Spleen (tissue), 13 donors: ENCODE measurements at regions of chr2 and their contacts with region 1.

Region 1: GRCh38 chr2:60998628-60999545 is 18.6 kb upstream of the PEX13 start:
- DNase-seq: no peak
- H3K4me3 ChIP-seq: no peak overlapping the region
- H3K27ac ChIP-seq: peak overlapping the region in 1 of 8 donors; percentile 2
- H3K4me1 ChIP-seq: peaks cover 0 to 29% (median 5%) of the 10 kb centered on the region in 6 donors
- H3K27me3 ChIP-seq: no peaks in the 10 kb centered on the region
- CTCF ChIP-seq: peak; percentile 37 to 76 (median 65)
- POLR2A ChIP-seq: no peak

Region 2: DNA sequence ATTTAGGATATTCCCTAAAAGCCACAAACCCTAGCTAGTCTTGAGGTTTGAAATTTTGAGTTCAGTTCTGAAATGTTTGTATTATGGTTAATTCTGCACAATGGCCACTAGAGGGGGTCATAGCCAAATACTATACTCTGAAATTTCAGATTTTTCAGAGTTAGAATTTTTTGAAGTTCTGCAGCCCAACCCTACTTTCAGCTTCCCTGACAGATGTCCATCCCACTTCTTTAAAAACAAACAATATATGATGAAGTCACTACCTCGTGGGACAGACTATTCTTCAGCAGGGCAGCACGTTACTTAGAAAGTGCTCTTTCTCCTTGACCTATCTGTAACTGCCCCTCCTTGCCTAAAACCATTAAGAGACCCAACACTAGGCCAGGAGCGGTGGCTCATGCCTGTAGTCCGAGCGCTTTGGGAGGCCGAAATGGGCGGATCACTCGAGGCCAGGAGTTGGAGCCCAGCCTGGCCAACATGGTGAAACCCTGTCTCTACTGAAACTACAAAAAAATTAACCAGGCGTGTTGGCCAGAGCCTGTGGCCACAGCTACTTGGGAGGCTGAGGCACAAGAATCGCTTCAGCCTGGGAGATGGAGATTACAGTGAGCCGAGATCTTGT is 291.0 kb before region 1 on chr2:
- intact Hi-C with region 1: loop called (anchors 5 kb)
- DNase-seq: no peak
- H3K4me3 ChIP-seq: no peak overlapping the region
- H3K27ac ChIP-seq: no peak overlapping the region
- H3K4me1 ChIP-seq: peaks cover 0 to 4% (median 0%) of the 10 kb centered on the region in 6 donors
- H3K27me3 ChIP-seq: no peaks in the 10 kb centered on the region
- CTCF ChIP-seq: peak; percentile 25 to 80 (median 60)
- POLR2A ChIP-seq: no peak

Region 3: GRCh38 chr2:60794277-60794863 is 204.5 kb before region 1 on chr2:
- intact Hi-C with region 1: loop called (anchors 5 kb)
- DNase-seq: no peak
- H3K4me3 ChIP-seq: no peak overlapping the region
- H3K27ac ChIP-seq: no peak overlapping the region
- H3K4me1 ChIP-seq: peaks cover 7 to 32% (median 19%) of the 10 kb centered on the region in 6 donors
- H3K27me3 ChIP-seq: no peaks in the 10 kb centered on the region
- CTCF ChIP-seq: peak; percentile 15 to 68 (median 51)
- POLR2A ChIP-seq: no peak